ENCODE measurements at regions of chr11 and their contacts with region 1.

Region 1: DNA sequence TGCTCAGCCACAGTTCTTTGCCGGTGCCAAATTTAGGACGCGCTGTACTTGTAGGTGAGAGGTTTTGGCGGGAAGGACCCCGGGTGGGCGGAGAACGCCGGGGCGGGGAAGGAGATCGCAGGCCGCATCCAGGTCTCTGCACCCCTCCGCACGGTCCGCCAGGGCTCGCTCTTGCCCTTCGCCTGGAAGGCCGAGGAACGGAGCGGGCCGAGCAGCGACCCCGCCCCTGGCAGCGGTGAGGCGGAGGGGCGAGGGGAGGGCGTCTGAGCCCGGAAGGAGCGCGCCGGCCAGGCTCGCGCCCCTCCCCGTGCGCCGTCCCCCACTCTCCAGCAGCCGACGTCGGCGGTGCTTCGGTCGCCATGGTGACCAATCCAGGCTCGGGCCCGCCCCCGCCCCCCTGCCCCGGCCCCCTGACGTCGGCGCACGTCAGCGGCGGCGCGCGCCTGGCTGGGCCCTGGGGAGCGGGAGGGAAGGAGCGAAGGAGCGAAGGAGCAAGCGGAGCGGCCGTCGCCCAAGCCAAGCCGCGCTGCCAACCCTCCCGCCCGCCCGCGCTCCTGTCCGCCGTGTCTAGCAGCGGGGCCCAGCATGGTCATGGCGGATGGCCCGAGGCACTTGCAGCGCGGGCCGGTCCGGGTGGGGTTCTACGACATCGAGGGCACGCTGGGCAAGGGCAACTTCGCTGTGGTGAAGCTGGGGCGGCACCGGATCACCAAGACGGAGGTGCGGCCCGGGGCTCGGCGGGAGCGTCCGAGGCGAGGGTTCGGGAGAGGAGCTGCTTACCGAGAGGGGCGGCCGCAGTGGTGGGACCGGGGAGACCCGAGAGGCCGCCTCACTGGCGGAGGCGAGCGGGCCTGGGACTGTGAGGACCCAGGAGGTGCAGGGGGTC is at the start of gene SIK2:
- DNase-seq: peak; percentile 97
- CTCF ChIP-seq: peak; percentile 95

Region 2: DNA sequence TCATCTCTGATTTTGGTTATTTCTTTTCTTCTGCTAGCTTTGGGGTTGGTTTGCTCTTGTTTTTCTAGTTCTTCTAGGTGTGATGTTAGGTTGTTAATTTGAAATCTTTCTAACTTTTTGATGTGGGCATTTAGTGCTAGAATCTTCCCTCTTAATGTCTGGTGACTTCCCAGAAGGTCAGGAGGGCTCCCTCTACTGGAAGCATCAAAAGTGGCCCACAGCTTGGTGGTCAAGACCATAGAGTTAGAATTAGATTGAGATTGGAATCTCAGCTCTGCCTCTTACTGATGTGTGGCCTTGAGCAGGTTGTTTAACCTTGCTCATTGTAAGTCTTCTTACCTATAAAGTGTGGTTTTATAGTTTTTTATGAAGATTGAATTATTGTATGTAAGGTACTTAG is 1073.2 kb before region 1 on chr11:
- CTCF ChIA-PET with region 1: no interaction called
- POLR2A ChIA-PET with region 1: no interaction called
- DNase-seq: no peak
- CTCF ChIP-seq: peak; percentile 37

Region 3: GRCh38 chr11:111352935-111353710 is 249.1 kb before region 1 on chr11:
- CTCF ChIA-PET with region 1: no interaction called
- POLR2A ChIA-PET with region 1: no interaction called
- DNase-seq: no peak
- CTCF ChIP-seq: peak; percentile 21

Region 4: GRCh38 chr11:111557425-111558111 is 44.7 kb before region 1 on chr11:
- CTCF ChIA-PET with region 1: no interaction called
- POLR2A ChIA-PET with region 1: no interaction called
- DNase-seq: no peak
- CTCF ChIP-seq: no peak

Region 5: DNA sequence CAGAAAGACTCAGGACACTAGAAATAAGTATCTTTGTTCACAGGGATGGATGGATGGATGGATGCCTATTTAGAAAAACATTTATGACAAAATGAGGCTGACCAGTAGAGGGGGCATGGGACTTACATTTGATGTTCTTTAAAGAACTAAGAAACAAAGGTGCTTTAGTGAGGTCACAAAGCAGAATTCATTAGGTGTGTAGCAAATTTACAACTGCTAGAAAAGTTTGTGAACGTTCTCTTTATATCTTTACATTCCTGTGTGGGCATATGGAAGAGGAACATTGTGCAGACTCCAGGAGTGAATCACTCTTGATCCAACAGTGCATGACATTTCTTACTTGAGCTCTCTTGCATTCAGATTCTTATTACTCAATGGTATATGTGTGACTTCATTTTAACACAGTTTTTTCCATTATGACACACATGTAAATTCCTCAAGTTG is 15.8 kb before region 1 on chr11:
- CTCF ChIA-PET with region 1: interaction called, 21 read pairs
- POLR2A ChIA-PET with region 1: no interaction called
- DNase-seq: peak; percentile 43
- CTCF ChIP-seq: peak; percentile 53

Region 6: DNA sequence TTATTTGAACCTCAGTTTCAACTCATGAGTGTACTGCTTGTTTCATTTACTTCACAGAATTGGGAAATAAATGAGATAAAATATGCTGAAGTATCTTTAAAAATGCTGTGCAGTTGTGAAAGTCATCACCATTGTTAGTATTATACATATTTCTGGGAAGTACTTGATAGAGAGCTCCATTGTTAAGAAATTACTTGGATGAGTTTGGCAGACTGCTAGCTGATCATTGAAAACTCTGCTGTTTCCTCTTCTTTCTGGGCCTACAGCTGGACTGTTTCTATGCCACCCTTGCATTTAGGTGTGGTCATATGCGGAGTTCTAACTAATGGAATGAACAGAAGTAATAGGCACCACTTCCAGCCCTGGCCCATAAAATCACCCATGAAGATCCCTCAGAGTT is 10.0 kb after region 1 on chr11:
- CTCF ChIA-PET with region 1: interaction called, 52 read pairs
- POLR2A ChIA-PET with region 1: no interaction called
- DNase-seq: no peak
- CTCF ChIP-seq: no peak

Region 7: GRCh38 chr11:111617286-111617685 is 15.1 kb after region 1 on chr11:
- CTCF ChIA-PET with region 1: interaction called, 52 read pairs
- POLR2A ChIA-PET with region 1: no interaction called
- DNase-seq: no peak
- CTCF ChIP-seq: no peak

Region 8: DNA sequence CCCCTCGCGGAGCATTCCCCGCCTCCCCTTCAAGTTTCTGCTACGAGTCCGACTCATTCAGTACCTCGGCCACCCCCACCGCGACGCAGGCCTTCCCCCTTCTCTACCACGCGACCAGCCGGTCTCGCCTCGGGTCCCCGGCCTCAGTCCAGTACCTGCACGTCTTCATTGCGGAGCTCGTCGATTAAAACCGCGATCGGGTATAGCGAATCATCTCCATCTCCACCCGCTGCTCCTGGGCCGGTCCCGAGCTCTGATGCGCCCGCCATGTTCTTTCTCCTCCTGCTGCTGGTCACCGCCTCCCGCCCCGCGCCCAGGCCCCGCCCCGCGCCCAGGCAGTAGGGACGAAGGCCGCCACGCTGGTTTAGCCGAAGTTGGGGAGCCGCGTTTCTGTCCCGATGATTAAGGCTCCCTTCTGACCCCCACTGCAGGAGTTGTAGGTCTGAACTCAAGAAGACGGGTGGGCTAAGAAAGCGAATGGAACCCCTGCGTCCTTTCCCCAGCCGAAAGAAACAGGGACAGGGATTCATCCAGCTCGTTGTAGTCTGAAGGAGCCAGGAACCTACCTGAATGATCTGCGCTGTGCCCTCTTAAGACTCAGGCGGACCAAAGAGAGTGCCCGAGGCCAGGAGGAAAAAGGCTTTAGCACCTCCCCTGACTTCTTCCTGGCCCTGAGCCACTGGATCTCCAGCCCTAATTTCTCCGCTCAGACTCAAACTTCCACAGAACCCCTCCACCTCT is 164.0 kb after region 1 on chr11 and contains the start of gene PPP2R1B:
- CTCF ChIA-PET with region 1: interaction called, 12 read pairs
- POLR2A ChIA-PET with region 1: no interaction called
- DNase-seq: peak; percentile 97
- CTCF ChIP-seq: no peak

Region 9: DNA sequence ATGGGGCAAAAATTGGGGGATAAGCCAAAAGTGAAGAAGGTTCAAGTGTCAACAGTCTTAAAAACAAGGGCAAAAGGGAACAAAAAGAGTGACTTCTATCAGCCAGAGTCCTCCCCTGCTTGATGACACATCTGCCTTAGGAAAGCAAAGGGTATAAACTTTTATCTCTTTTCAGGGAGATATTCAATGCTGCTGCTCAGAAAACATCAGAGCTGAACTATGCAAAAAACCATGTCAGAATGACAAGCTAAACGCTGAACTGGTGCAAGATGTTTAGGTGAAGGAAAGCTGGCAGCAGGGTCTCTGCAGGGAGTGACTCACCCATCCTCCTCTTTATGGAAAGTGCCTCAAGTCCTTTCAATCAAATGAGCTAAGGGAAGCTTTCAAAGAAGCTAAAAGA is 244.4 kb after region 1 on chr11:
- CTCF ChIA-PET with region 1: interaction called, 14 read pairs
- POLR2A ChIA-PET with region 1: no interaction called
- DNase-seq: no peak
- CTCF ChIP-seq: no peak